ENCODE measurements at regions of chr13 and their contacts with region 1.

Region 1: GRCh38 chr13:24220086-24220703 is 59.7 kb downstream of the SPATA13 start:
- DNase-seq: peak; percentile 25
- ATAC-seq: peak; percentile 81
- H3K4me3 Mint-ChIP-seq: no peak overlapping the region
- H3K27ac Mint-ChIP-seq: peak overlapping the region; percentile 90; the same call in 1 of the 2 replicates
- H3K4me1 Mint-ChIP-seq: peaks cover 36% of the 10 kb centered on the region
- H3K27me3 Mint-ChIP-seq: no peaks in the 10 kb centered on the region
- CTCF ChIP-seq: peak; percentile 52

Region 2: DNA sequence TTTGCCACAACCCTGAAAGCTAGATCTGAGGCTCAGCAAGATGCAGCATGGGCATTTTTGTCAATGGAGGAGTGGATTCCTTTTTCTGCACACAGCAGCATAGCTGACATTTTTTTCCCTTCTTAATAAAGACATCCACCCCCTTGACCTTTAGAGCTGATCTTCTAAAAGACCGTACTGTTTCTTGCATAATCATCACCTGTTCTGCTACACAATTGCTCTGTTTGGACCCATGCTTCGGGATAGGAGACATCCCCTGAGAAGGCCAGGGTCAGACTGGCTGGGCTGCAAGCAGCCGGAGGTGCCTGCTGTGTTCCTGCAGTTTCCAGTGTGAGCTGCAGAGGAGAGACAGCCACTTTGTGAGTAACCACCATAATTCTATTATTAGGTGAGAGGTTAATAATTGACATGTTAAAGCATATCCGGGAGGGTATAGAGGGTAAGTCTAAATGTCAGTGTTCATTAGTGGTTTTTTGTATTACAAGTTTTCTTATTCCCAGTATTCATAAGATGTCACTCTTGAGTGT is 214.4 kb before region 1 on chr13:
- CTCF ChIA-PET with region 1: interaction called, 3 read pairs
- POLR2A ChIA-PET with region 1: interaction called, 12 read pairs
- DNase-seq: no peak
- ATAC-seq: no peak
- H3K4me3 Mint-ChIP-seq: no peak overlapping the region
- H3K27ac Mint-ChIP-seq: no peak overlapping the region; the same call in 1 of the 2 replicates
- H3K4me1 Mint-ChIP-seq: peaks cover 21% of the 10 kb centered on the region
- H3K27me3 Mint-ChIP-seq: no peaks in the 10 kb centered on the region; the same call in 1 of the 2 replicates
- CTCF ChIP-seq: no peak

Region 3: GRCh38 chr13:24020375-24020830 is 199.8 kb before region 1 on chr13:
- CTCF ChIA-PET with region 1: interaction called, 59 read pairs
- POLR2A ChIA-PET with region 1: no interaction called
- DNase-seq: peak; percentile 53
- ATAC-seq: 0 out of 2 replicates have a peak, but pooled peaks have one; percentile 44
- H3K4me3 Mint-ChIP-seq: no peak overlapping the region
- H3K27ac Mint-ChIP-seq: no peak overlapping the region
- H3K4me1 Mint-ChIP-seq: no peaks in the 10 kb centered on the region
- H3K27me3 Mint-ChIP-seq: no peaks in the 10 kb centered on the region; the same call in 1 of the 2 replicates
- CTCF ChIP-seq: peak; percentile 29; the same call in 1 of the 2 replicates

Region 4: GRCh38 chr13:24160454-24161009 is 59.7 kb before region 1 on chr13 and contains the start of gene SPATA13:
- CTCF ChIA-PET with region 1: interaction called, 16 read pairs
- POLR2A ChIA-PET with region 1: interaction called, 3 read pairs
- DNase-seq: peak; percentile 96
- ATAC-seq: peak; percentile 87
- H3K4me3 Mint-ChIP-seq: peak within 1 kb of the TSS; percentile 84
- H3K27ac Mint-ChIP-seq: no peak within 1 kb of the TSS
- H3K4me1 Mint-ChIP-seq: peaks cover 38% of the 10 kb centered on the region
- H3K27me3 Mint-ChIP-seq: peaks cover 9% of the 10 kb centered on the region
- CTCF ChIP-seq: no peak
- total RNA-seq, gene SPATA13: 22.1 to 29.0 TPM (median 23.1 TPM) in 3 replicates